ENCODE measurements at regions of chr1 and their contacts with region 1.

Region 1: DNA sequence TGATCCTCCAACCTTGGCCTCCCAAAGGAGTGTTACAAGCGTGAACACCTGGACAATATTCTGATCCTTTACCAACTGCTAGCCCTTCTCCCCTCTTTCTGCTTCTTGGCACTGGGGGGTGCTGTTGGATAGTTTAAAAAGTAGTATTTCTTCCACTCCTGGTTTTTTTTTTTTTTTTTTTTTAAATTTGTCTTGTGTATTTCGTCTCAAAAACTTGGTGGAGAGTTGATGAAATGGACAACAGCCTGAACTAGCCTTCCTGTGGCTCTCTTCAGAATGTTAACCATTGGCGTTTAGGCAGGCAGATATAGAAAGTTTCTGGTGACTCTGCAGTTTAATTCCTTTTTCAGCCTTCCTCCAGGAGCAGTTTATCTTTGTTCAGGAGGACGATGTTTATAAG is 69.7 kb upstream of the USP24 start:
- DNase-seq: no peak
- ATAC-seq: peak in 1 of 2 donors; percentile 61
- H3K4me3 ChIP-seq: no peak overlapping the region
- H3K27ac ChIP-seq: no peak overlapping the region
- H3K4me1 ChIP-seq: no peaks in the 10 kb centered on the region
- H3K27me3 ChIP-seq: no peaks in the 10 kb centered on the region
- CTCF ChIP-seq: peak; percentile 57

Region 2: DNA sequence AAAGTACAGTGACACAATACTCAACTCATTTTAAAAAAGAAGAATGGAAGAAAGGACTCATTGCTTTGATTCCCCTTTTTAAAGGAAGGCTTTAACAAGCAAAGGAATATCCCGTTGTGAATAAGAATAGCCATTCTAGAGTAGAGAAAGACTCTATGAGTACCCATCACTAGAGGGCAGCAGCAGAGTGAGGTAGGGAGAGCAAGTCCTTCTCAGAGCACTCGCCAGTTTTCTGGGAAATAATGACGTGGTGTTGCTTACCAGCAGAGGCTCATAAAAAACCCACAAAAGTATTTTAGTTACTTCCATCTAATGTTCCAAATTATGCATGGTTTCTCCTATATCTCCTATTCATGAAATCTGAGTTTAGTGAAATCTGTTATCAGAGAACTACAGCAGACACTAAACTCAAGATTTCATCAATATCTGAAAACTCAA is 144.3 kb before region 1 on chr1:
- intact Hi-C with region 1: loop called (anchors 5 kb)
- DNase-seq: no peak
- ATAC-seq: peak; percentile 95 to 97
- H3K4me3 ChIP-seq: no peak overlapping the region
- H3K27ac ChIP-seq: no peak overlapping the region
- H3K4me1 ChIP-seq: no peaks in the 10 kb centered on the region
- H3K27me3 ChIP-seq: no peaks in the 10 kb centered on the region
- CTCF ChIP-seq: peak; percentile 78

Region 3: GRCh38 chr1:56584910-56585528 is 1300.2 kb after region 1 on chr1:
- intact Hi-C with region 1: loop called (anchors 5 kb)
- DNase-seq: no peak
- ATAC-seq: peak; percentile 61 to 73
- H3K4me3 ChIP-seq: no peak overlapping the region
- H3K27ac ChIP-seq: no peak overlapping the region
- H3K4me1 ChIP-seq: peaks cover 5% of the 10 kb centered on the region
- H3K27me3 ChIP-seq: no peaks in the 10 kb centered on the region
- CTCF ChIP-seq: peak; percentile 89